T-cell (primary cell): ENCODE measurements at regions of chr19 and their contacts with region 1.

Region 1: GRCh38 chr19:8412783-8413628 is at the start of gene MARCHF2:
- DNase-seq: peak; percentile 81 to 99 (median 95)
- ATAC-seq: peak; percentile 99 to 100 (median 100)
- H3K4me3 ChIP-seq: peak within 1 kb of the TSS; percentile 62 to 83
- H3K4me3 Mint-ChIP-seq: peak within 1 kb of the TSS; percentile 55 to 76 (median 66)
- H3K27ac ChIP-seq: no peak within 1 kb of the TSS
- H3K27ac Mint-ChIP-seq: peak within 1 kb of the TSS in 1 of 2 donors; percentile 41
- H3K4me1 ChIP-seq: peaks cover 7 to 14% of the 10 kb centered on the region in 2 experiments
- H3K4me1 Mint-ChIP-seq: peaks cover 4 to 12% (median 6%) of the 10 kb centered on the region in 3 donors
- H3K27me3 ChIP-seq: no peaks in the 10 kb centered on the region
- H3K27me3 Mint-ChIP-seq: no peaks in the 10 kb centered on the region
- total RNA-seq, gene MARCHF2: 20.6 to 40.7 (median 35.6) TPM

Region 2: GRCh38 chr19:8389891-8390616 is 23.0 kb before region 1 on chr19 and contains the start of gene RAB11B:
- CTCF ChIA-PET with region 1: interaction called, 3 to 24 read pairs
- POLR2A ChIA-PET with region 1: no interaction called
- DNase-seq: peak; percentile 96 to 100 (median 99)
- ATAC-seq: peak; percentile 90 to 93 (median 92)
- H3K4me3 ChIP-seq: peak within 1 kb of the TSS; percentile 79 to 96
- H3K4me3 Mint-ChIP-seq: peak within 1 kb of the TSS; percentile 87 to 93 (median 92)
- H3K27ac ChIP-seq: peak within 1 kb of the TSS; percentile 92
- H3K27ac Mint-ChIP-seq: peak within 1 kb of the TSS; percentile 95
- H3K4me1 ChIP-seq: peaks cover 7 to 31% of the 10 kb centered on the region in 2 experiments
- H3K4me1 Mint-ChIP-seq: peaks cover 21 to 39% (median 29%) of the 10 kb centered on the region in 3 donors
- H3K27me3 ChIP-seq: no peaks in the 10 kb centered on the region
- H3K27me3 Mint-ChIP-seq: no peaks in the 10 kb centered on the region
- total RNA-seq, gene RAB11B: 87.5 to 125 (median 116) TPM

Region 3: DNA sequence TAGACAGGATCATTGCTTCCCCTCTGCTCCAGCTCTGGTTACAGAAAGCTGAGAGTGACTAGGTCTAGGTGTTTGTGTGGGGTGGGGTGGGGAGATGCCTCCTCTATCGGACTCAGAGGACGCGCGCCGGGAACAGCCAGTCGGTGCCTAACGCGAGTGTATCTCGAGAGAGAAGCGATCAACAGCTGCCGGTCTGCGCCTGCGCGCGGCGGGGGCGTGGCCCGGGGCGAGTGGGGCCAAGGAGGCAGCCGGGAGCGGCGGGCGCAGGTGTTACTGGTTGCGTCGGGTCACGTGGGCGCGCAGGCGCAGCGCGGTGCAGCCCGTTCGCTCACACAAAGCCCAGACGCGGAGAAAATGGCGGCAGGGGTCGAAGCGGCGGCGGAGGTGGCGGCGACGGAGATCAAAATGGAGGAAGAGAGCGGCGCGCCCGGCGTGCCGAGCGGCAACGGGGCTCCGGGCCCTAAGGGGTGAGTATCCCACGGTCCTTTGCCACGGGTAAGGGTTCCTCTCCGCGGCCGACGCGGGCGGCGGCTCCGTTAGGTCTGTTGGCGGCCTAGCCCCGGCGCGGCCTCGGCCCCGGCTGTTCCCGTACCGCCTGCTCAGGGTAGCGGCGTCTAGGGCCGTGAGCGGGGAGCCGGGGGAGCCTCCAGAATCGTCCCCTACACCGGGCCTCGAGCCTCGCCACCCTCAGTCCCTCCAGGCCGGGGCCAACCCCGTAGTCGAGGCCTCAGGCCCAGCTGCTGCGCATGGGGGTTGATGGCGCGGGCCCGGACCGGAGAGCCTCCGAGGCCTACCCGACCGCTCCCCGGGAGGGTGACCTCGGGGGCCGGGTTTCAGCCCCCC is 31.9 kb after region 1 on chr19 and contains the start of gene HNRNPM:
- CTCF ChIA-PET with region 1: interaction called, 4 to 14 read pairs
- POLR2A ChIA-PET with region 1: no interaction called
- DNase-seq: peak; percentile 99 to 100 (median 100)
- ATAC-seq: peak; percentile 90 to 95 (median 94)
- H3K4me3 ChIP-seq: peak within 1 kb of the TSS; percentile 87 to 97
- H3K4me3 Mint-ChIP-seq: peak within 1 kb of the TSS; percentile 94 to 99 (median 98)
- H3K27ac ChIP-seq: peak within 1 kb of the TSS; percentile 87
- H3K27ac Mint-ChIP-seq: peak within 1 kb of the TSS; percentile 96
- H3K4me1 ChIP-seq: peaks cover 29 to 46% of the 10 kb centered on the region in 2 experiments
- H3K4me1 Mint-ChIP-seq: peaks cover 41 to 47% (median 45%) of the 10 kb centered on the region in 3 donors
- H3K27me3 ChIP-seq: no peaks in the 10 kb centered on the region
- H3K27me3 Mint-ChIP-seq: no peaks in the 10 kb centered on the region
- total RNA-seq, gene HNRNPM: 200 to 272 (median 213) TPM